ENCODE measurements at regions of chr11 and their contacts with region 1.

Region 1: DNA sequence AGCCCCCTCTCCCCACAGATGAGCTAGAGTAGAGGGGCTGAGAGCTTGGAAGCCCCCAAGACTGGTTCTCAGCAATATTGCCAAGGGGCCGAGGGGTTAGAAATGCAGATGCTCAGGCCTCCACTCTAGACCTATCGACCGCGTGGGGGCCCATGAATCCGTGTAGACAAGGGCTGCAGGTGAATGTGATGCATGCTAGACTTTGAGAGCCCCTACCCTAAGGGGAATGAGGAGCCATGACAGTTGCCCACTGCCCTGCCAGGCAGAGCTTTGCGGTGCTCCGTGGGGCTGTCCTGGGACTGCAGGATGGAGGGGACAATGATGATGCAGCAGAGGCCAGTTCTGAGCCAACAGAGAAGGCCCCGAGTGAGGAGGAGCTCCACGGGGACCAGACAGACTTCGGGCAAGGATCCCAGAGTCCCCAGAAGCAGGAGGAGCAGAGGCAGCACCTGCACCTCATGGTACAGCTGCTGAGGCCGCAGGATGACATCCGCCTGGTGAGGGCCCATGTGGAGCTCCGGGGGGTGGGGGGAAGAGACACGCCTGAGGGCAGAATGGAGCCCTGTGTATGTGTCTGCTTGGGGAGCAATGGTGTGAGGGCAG is 1.3 kb downstream of the SSH3 start:
- DNase-seq: peak in 2 of 3 donors; percentile 49 to 55
- ATAC-seq: no peak
- H3K4me3 ChIP-seq: peak overlapping the region; percentile 93 to 99 (median 96)
- H3K27ac ChIP-seq: no peak overlapping the region
- H3K4me1 ChIP-seq: peaks cover 0 to 22% (median 8%) of the 10 kb centered on the region in 4 donors
- H3K27me3 ChIP-seq: no peaks in the 10 kb centered on the region
- CTCF ChIP-seq: no peak
- POLR2A ChIP-seq: no peak

Region 2: GRCh38 chr11:67111261-67111660 is 193.4 kb before region 1 on chr11:
- intact Hi-C with region 1: no loop called
- DNase-seq: no peak
- ATAC-seq: no peak
- H3K4me3 ChIP-seq: no peak overlapping the region
- H3K27ac ChIP-seq: peak overlapping the region in 2 of 3 donors; percentile 5 to 24
- H3K4me1 ChIP-seq: peaks cover 0 to 19% (median 7%) of the 10 kb centered on the region in 4 donors
- H3K27me3 ChIP-seq: no peaks in the 10 kb centered on the region
- CTCF ChIP-seq: no peak
- POLR2A ChIP-seq: no peak

Region 3: GRCh38 chr11:67252831-67253239 is 51.8 kb before region 1 on chr11:
- intact Hi-C with region 1: no loop called
- DNase-seq: peak in 1 of 3 donors; percentile 51
- ATAC-seq: peak; percentile 16 to 52 (median 38)
- H3K4me3 ChIP-seq: no peak overlapping the region
- H3K27ac ChIP-seq: no peak overlapping the region
- H3K4me1 ChIP-seq: peaks cover 0 to 36% (median 14%) of the 10 kb centered on the region in 4 donors
- H3K27me3 ChIP-seq: no peaks in the 10 kb centered on the region
- CTCF ChIP-seq: peak; percentile 25 to 46 (median 30)
- POLR2A ChIP-seq: no peak

Region 4: DNA sequence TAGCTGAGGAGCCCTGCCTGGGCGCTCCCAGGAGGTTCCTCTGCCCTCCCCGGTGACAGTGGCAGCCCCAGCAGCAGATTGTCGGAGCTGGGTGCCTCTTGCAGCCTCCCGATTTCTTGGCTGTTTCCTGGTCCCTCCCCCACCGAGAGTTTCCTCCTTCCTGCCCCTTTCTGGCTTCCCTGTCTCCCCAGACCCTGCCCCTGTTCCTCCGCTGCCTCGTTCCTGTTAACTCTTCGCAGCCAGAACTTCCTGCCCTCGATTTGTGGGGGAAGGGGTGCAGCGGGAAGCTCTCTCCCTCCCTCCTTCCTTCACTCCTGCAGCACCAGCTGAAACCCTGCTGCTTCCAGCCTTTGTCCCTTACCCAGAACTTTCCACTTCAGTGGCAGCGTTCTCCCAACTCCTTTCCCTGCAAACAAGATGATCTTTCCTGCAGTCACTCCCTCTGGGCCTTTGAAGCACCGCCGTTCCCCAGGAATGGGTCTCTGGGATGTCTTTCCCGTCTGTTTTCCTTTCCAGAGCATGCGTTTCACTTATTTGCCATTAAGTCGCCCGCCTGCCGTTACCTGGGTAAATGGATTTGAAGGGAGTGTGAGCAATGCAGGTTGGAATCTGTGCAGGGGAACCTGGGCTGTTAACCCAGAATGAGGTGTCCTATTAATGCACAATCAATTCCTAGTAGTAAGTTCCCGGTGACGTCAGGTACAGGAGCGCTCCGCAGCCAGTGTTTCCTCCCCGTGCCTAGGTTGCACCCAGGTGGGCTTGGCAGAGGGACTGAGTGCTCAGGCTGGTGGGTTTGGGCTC is 34.2 kb before region 1 on chr11:
- intact Hi-C with region 1: loop called in 1 of 2 experiments (anchors 5 kb)
- DNase-seq: peak in 2 of 3 donors; percentile 56 to 70
- ATAC-seq: peak; percentile 2 to 6 (median 6)
- H3K4me3 ChIP-seq: peak overlapping the region; percentile 13 to 31 (median 15)
- H3K27ac ChIP-seq: peak overlapping the region; percentile 30 to 90 (median 30)
- H3K4me1 ChIP-seq: peaks cover 0 to 48% (median 14%) of the 10 kb centered on the region in 4 donors
- H3K27me3 ChIP-seq: no peaks in the 10 kb centered on the region
- CTCF ChIP-seq: no peak
- POLR2A ChIP-seq: peak; percentile 1